H1 (cell line): ENCODE measurements at regions of chr22 and their contacts with region 1.

Region 1: GRCh38 chr22:24695561-24696511 is 78.7 kb downstream of the PIWIL3 start:
- DNase-seq: peak in 1 of 2 experiments; percentile 70
- H3K4me3 ChIP-seq: peak overlapping the region in 1 of 4 experiments; percentile 39; a peak in 2 of 8 replicates
- H3K27ac ChIP-seq: peak overlapping the region; percentile 50; the same call in 1 of the 2 replicates
- H3K4me1 ChIP-seq: peaks cover 2 to 36% (median 27%) of the 10 kb centered on the region in 4 experiments
- H3K27me3 ChIP-seq: no peaks in the 10 kb centered on the region
- CTCF ChIP-seq: no peak
- EP300 ChIP-seq: no peak
- POLR2A ChIP-seq: no peak
- RAD21 ChIP-seq: no peak

Region 2: GRCh38 chr22:24707470-24707801 is 11.6 kb after region 1 on chr22:
- CTCF ChIA-PET with region 1: interaction called, 11 read pairs
- POLR2A ChIA-PET with region 1: interaction called, 3 read pairs
- DNase-seq: peak in 1 of 2 experiments; percentile 53
- H3K4me3 ChIP-seq: no peak overlapping the region
- H3K27ac ChIP-seq: no peak overlapping the region
- H3K4me1 ChIP-seq: peaks cover 0 to 10% (median 4%) of the 10 kb centered on the region in 4 experiments; a peak in 4 of 7 replicates
- H3K27me3 ChIP-seq: no peaks in the 10 kb centered on the region
- CTCF ChIP-seq: peak in 2 of 3 experiments; percentile 15 to 37; a peak in 2 of 4 replicates
- EP300 ChIP-seq: no peak
- POLR2A ChIP-seq: no peak
- RAD21 ChIP-seq: peak in 1 of 2 experiments; percentile 34; a peak in 1 of 4 replicates